ENCODE measurements at regions of chr15 and their contacts with region 1.

Region 1: DNA sequence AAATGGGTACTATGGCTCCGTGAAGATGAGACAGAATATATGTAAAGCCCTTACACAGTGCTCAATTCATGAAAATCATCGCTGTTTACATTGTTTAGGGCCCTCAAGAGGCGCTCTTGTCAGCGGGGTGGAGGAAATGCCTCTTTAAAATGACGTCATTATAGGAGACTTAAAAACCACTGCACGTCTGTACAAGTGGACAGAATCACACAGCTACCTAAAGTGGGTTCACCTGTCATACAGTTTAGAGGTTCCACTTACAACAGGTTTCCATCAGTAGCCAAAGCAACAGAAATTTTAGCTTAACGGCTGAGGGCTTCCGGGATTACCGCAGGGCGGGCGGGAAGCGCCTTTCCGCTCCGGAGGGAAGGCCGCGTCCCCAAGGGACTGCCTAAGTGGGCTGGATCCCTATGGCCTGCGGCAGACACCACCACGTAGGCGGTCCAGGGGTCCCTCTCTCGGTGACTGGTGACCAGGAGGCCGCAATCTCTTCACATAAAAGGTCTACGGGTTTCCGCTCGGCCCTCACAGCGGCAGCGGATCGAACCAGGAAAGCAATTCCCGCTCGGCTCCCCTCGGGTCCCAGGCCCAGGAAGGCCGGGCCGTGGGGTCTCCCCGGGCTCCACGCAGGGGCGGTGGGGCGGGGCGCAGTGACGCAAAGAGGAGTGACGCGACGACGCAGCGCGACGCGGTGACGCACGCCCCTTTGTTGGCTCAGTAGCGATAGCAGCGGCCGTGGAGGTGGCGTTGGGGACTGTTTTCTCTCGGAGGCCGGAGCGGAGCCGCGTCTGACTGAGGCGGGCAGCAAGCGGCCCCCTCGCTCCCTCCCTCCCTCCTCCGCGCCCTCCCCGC is at the start of gene ARIH1:
- DNase-seq: peak; percentile 96 to 98
- H3K4me3 ChIP-seq: peak within 1 kb of the TSS; percentile 100
- H3K4me3 Mint-ChIP-seq: peak within 1 kb of the TSS; percentile 93
- H3K27ac Mint-ChIP-seq: peak within 1 kb of the TSS; percentile 99
- H3K4me1 ChIP-seq: peaks cover 6% of the 10 kb centered on the region; the same call in 1 of the 2 replicates
- H3K4me1 Mint-ChIP-seq: peaks cover 7% of the 10 kb centered on the region
- H3K27me3 ChIP-seq: no peaks in the 10 kb centered on the region
- H3K27me3 Mint-ChIP-seq: no peaks in the 10 kb centered on the region
- CTCF ChIP-seq: peak in 1 of 2 experiments; percentile 25
- total RNA-seq, gene ARIH1: 116 and 126 TPM in 2 replicates

Region 2: GRCh38 chr15:72375847-72376581 is 97.8 kb before region 1 on chr15 and contains the start of gene HEXA:
- CTCF ChIA-PET with region 1: no interaction called
- POLR2A ChIA-PET with region 1: interaction called, 6 read pairs
- intact Hi-C with region 1: loop called (anchors 1 kb)
- DNase-seq: peak; percentile 98 to 99
- H3K4me3 ChIP-seq: peak within 1 kb of the TSS; percentile 92
- H3K4me3 Mint-ChIP-seq: peak within 1 kb of the TSS; percentile 89
- H3K27ac Mint-ChIP-seq: peak within 1 kb of the TSS; percentile 88
- H3K4me1 ChIP-seq: peaks cover 11% of the 10 kb centered on the region; the same call in 1 of the 2 replicates
- H3K4me1 Mint-ChIP-seq: peaks cover 13% of the 10 kb centered on the region
- H3K27me3 ChIP-seq: no peaks in the 10 kb centered on the region
- H3K27me3 Mint-ChIP-seq: no peaks in the 10 kb centered on the region
- CTCF ChIP-seq: no peak
- total RNA-seq, gene HEXA: 151 and 153 TPM in 2 replicates

Region 3: GRCh38 chr15:72389231-72389630 is 84.6 kb before region 1 on chr15:
- CTCF ChIA-PET with region 1: no interaction called
- POLR2A ChIA-PET with region 1: no interaction called
- intact Hi-C with region 1: no loop called
- DNase-seq: no peak
- H3K4me3 ChIP-seq: no peak overlapping the region
- H3K4me3 Mint-ChIP-seq: no peak overlapping the region
- H3K27ac Mint-ChIP-seq: no peak overlapping the region
- H3K4me1 ChIP-seq: no peaks in the 10 kb centered on the region
- H3K4me1 Mint-ChIP-seq: no peaks in the 10 kb centered on the region
- H3K27me3 ChIP-seq: no peaks in the 10 kb centered on the region
- H3K27me3 Mint-ChIP-seq: peaks cover 15% of the 10 kb centered on the region
- CTCF ChIP-seq: no peak

Region 4: DNA sequence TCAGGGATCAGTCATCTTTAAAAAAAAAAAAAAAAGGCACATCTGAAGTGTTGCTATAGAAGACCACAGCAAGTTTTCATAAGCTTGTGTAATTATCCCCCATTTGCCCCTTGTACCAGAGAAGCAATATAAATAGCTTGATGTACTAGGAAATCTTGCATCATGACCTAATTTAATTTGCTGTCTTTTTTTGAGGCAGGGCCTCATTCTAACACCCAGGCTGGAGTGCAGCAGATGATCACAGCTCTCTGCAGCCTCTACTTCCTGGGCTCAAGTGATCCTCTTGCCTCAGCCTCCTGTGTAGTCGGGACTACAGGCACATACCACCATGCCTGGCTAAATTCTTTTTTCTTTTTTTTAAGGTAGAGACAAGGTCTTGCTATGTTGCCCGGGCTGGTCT is 89.0 kb after region 1 on chr15:
- CTCF ChIA-PET with region 1: no interaction called
- POLR2A ChIA-PET with region 1: no interaction called
- intact Hi-C with region 1: no loop called
- DNase-seq: no peak
- H3K4me3 ChIP-seq: no peak overlapping the region
- H3K4me3 Mint-ChIP-seq: no peak overlapping the region
- H3K27ac Mint-ChIP-seq: no peak overlapping the region
- H3K4me1 ChIP-seq: no peaks in the 10 kb centered on the region
- H3K4me1 Mint-ChIP-seq: peaks cover 5% of the 10 kb centered on the region
- H3K27me3 ChIP-seq: no peaks in the 10 kb centered on the region
- H3K27me3 Mint-ChIP-seq: no peaks in the 10 kb centered on the region
- CTCF ChIP-seq: no peak

Region 5: DNA sequence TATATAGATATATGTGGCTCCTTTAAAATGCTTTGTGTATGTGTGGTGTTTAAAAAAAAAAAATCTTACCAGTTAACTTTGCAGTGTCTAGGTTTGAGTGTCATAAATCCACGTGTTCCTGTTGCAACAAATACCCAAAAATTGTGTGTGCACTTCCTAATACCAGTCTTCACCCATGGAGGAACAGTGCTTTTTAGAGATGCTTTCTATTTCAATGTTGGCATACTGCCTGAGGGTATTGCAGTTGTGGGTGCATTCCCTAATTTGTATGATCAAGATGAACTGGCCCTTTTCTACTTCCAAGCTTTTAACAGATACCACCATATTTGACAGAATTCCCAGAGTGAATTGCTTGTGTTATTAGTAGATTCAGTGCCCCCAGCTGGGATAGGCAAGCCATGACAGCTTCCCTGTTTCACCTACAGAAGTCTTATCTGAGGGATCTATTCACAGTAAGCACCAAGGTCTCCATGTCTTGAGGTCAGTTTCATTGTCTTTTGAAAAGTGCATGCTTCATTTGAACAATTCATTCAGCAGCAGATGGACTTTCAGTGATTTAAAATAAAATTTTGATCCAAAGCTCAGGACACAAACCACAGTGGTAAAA is 111.7 kb after region 1 on chr15:
- CTCF ChIA-PET with region 1: no interaction called
- POLR2A ChIA-PET with region 1: no interaction called
- intact Hi-C with region 1: loop called (anchors 10 kb)
- DNase-seq: no peak
- H3K4me3 ChIP-seq: no peak overlapping the region
- H3K4me3 Mint-ChIP-seq: no peak overlapping the region
- H3K27ac Mint-ChIP-seq: no peak overlapping the region
- H3K4me1 ChIP-seq: no peaks in the 10 kb centered on the region
- H3K4me1 Mint-ChIP-seq: peaks cover 7% of the 10 kb centered on the region
- H3K27me3 ChIP-seq: no peaks in the 10 kb centered on the region
- H3K27me3 Mint-ChIP-seq: no peaks in the 10 kb centered on the region
- CTCF ChIP-seq: peak; percentile 4 to 9

Measured in Caco-2 (cell line).